Calu3 (cell line): ENCODE measurements at regions of chr19 and their contacts with region 1.

Region 1: GRCh38 chr19:41993612-41994483 is at the start of gene ATP1A3:
- DNase-seq: peak; percentile 78
- H3K4me3 Mint-ChIP-seq: peak within 1 kb of the TSS; percentile 25
- H3K27ac Mint-ChIP-seq: no peak within 1 kb of the TSS
- H3K4me1 Mint-ChIP-seq: peaks cover 9% of the 10 kb centered on the region
- H3K27me3 Mint-ChIP-seq: peaks cover 42% of the 10 kb centered on the region
- CTCF ChIP-seq: no peak
- total RNA-seq, gene ATP1A3: 1.1 and 1.7 TPM in 2 replicates

Region 2: DNA sequence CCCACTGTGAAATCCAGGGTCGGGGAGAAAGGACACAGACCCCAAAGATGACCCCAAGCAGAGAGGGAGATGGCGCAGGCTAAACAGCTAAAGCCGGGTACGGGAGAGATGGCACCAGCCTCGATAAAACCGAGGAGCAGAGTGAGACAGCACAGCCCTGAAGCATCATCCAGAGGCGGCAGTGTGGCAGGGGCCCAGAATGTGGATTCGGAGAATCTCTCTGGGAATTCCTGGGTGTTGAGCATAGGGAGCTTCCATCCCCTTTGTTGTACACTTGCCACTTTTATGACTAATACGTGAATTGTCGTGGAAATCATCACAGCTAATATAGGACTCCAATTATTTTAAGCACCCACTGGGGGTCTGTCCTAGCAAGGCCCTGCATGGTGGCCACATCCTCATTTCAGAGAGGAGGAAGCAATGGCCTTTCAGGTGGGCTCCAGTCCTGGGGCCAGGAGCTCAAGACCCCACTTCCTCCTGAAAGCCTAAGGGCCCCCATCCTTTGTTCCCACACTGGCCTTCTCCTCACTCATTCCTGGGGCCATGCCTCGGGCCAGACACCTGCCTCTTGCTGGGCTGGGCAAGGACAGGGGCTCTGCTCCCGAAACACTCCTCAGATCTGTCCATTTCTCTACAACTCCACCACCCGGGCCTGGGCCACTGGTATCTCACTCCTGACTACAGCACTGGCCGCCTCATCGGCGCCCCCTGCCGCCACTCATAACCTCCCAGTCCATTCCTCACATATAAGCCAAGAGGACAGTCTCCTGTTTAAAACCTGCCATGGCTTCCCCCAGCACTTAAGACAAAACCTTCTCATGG is 29.5 kb after region 1 on chr19:
- CTCF ChIA-PET with region 1: interaction called, 11 read pairs
- intact Hi-C with region 1: no loop called
- DNase-seq: peak; percentile 54
- H3K4me3 Mint-ChIP-seq: no peak overlapping the region
- H3K27ac Mint-ChIP-seq: no peak overlapping the region
- H3K4me1 Mint-ChIP-seq: no peaks in the 10 kb centered on the region
- H3K27me3 Mint-ChIP-seq: peaks cover 97% of the 10 kb centered on the region
- CTCF ChIP-seq: peak; percentile 47

Region 3: DNA sequence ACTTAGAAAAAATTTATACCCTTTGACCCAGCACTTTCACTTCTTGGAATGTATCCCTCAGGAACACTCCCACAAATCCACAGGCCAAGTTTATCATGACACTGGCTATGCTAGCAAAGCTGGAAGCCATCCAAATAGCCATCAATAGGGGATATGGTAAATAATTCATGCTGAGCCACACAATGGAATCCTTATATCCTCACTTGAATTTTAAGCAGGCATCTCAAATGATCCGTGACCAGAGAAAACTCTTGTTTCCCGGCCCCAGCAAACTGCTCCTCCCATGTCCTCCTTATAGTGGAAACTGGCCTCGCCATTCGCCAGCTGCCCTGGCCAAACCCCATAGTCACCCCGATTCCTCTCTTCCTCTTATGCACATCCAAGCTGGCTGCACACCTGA is 38.6 kb after region 1 on chr19:
- CTCF ChIA-PET with region 1: interaction called, 8 read pairs
- intact Hi-C with region 1: loop called (anchors 5 kb)
- DNase-seq: peak; percentile 28
- H3K4me3 Mint-ChIP-seq: no peak overlapping the region
- H3K27ac Mint-ChIP-seq: no peak overlapping the region
- H3K4me1 Mint-ChIP-seq: peaks cover 20% of the 10 kb centered on the region
- H3K27me3 Mint-ChIP-seq: peaks cover 29% of the 10 kb centered on the region
- CTCF ChIP-seq: no peak

Region 4: DNA sequence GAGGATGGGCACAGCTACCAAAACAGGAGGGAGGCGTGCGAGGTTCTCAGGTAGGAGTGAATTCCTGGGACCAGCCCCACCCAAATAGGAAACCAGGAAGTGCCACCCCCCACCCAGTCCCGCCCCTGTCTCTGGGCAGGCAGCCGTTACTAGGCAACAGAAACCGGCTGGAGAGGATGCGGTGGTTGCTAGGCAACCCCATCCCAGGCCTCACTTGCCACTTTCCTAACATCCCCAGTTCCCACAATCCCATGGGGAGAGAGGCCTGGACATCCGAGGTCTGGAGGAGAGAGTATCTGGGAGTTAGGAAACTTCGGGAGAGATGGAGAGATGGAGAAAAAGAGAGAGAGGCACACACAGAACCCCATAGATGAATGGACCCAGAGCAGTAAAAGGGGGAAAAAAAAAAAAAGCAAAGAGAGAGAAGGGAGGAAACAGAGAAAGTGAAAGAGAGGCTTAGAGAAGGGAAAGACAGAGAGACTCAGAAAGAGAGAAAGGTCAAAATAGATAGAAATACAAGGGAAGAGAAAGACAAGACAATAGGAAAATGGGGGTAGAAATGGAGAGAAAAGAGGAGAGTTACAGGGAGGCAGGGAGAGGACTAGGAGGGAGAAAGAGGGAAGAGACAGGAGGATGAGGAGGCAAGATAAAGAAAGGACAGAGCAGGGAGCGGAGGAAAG is 72.4 kb after region 1 on chr19:
- CTCF ChIA-PET with region 1: no interaction called
- intact Hi-C with region 1: no loop called
- DNase-seq: peak; percentile 60
- H3K4me3 Mint-ChIP-seq: no peak overlapping the region
- H3K27ac Mint-ChIP-seq: no peak overlapping the region
- H3K4me1 Mint-ChIP-seq: no peaks in the 10 kb centered on the region
- H3K27me3 Mint-ChIP-seq: peaks cover 38% of the 10 kb centered on the region
- CTCF ChIP-seq: no peak

Region 5: GRCh38 chr19:42092350-42092749 is 98.5 kb after region 1 on chr19:
- CTCF ChIA-PET with region 1: interaction called, 3 read pairs
- intact Hi-C with region 1: loop called (anchors 10 kb)
- DNase-seq: peak; percentile 85
- H3K4me3 Mint-ChIP-seq: peak overlapping the region; percentile 7
- H3K27ac Mint-ChIP-seq: no peak overlapping the region
- H3K4me1 Mint-ChIP-seq: peaks cover 10% of the 10 kb centered on the region
- H3K27me3 Mint-ChIP-seq: no peaks in the 10 kb centered on the region
- CTCF ChIP-seq: peak; percentile 77

Region 6: DNA sequence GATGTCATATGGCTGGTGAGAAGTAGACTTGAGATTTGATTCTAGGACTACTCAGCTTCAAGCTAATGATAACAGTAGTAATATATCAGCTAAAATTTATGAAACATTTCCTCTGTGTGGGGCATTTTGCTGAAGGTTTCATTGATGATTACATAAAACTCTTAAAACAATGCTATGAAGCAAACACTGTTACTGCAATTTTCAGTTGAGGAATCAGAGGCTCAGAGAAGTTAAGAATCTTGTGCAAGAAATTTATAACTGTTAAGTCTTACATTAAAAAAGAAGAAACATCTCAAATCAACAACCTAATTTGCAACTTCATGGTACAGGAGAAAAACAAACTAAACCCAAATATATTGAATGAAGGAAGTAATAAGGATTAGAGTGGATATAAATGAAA is 590.6 kb after region 1 on chr19:
- CTCF ChIA-PET with region 1: interaction called, 10 read pairs
- intact Hi-C with region 1: no loop called
- DNase-seq: no peak
- H3K4me3 Mint-ChIP-seq: no peak overlapping the region
- H3K27ac Mint-ChIP-seq: no peak overlapping the region
- H3K4me1 Mint-ChIP-seq: no peaks in the 10 kb centered on the region
- H3K27me3 Mint-ChIP-seq: peaks cover 90% of the 10 kb centered on the region
- CTCF ChIP-seq: no peak